Activated CD4-positive, alpha-beta memory T cell treated with anti-CD3 and anti-CD28 coated beads, Interleukin-2, amount 10 ng/mL, durations not matched to agents 7 days and 5 days (primary cell): ENCODE measurements at regions of chr17 and their contacts with region 1.

Region 1: GRCh38 chr17:75046582-75047289 is at the starts of genes ATP5PD and KCTD2:
- DNase-seq: peak; percentile 96
- H3K4me3 Mint-ChIP-seq: peak within 1 kb of the TSS; percentile 96
- H3K27ac Mint-ChIP-seq: peak within 1 kb of the TSS; percentile 91
- H3K4me1 Mint-ChIP-seq: peaks cover 45% of the 10 kb centered on the region
- H3K27me3 Mint-ChIP-seq: no peaks in the 10 kb centered on the region
- total RNA-seq, gene ATP5PD: 242 TPM
- total RNA-seq, gene KCTD2: 24.2 to 24.9 TPM

Region 2: GRCh38 chr17:74601944-74602572 is 444.7 kb before region 1 on chr17:
- CTCF ChIA-PET with region 1: no interaction called
- POLR2A ChIA-PET with region 1: no interaction called
- DNase-seq: peak; percentile 51
- H3K4me3 Mint-ChIP-seq: no peak overlapping the region
- H3K27ac Mint-ChIP-seq: no peak overlapping the region
- H3K4me1 Mint-ChIP-seq: peaks cover 17% of the 10 kb centered on the region
- H3K27me3 Mint-ChIP-seq: peaks cover 46% of the 10 kb centered on the region

Region 3: GRCh38 chr17:74815550-74816370 is 231.0 kb before region 1 on chr17:
- CTCF ChIA-PET with region 1: no interaction called
- POLR2A ChIA-PET with region 1: no interaction called
- DNase-seq: no peak
- H3K4me3 Mint-ChIP-seq: no peak overlapping the region
- H3K27ac Mint-ChIP-seq: no peak overlapping the region
- H3K4me1 Mint-ChIP-seq: peaks cover 13% of the 10 kb centered on the region
- H3K27me3 Mint-ChIP-seq: no peaks in the 10 kb centered on the region

Region 4: DNA sequence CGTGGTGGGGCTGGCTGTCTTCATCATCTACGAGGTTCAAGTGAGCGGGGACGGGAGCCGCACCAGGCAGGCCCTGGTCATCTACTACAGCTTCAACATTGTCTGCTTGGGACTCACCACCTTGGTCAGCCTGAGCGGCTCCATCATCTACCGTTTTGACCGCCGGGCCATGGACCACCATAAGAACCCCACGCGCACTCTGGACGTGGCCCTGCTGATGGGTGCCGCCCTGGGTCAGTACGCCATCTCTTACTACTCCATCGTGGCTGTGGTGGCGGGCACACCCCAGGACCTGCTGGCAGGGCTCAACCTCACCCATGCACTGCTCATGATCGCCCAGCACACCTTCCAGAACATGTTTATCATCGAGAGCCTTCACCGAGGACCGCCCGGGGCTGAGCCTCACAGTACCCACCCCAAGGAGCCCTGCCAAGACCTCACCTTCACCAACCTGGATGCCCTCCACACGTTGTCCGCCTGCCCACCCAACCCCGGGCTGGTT is 116.2 kb before region 1 on chr17:
- CTCF ChIA-PET with region 1: no interaction called
- POLR2A ChIA-PET with region 1: no interaction called
- DNase-seq: no peak
- H3K4me3 Mint-ChIP-seq: no peak overlapping the region
- H3K27ac Mint-ChIP-seq: no peak overlapping the region
- H3K4me1 Mint-ChIP-seq: no peaks in the 10 kb centered on the region
- H3K27me3 Mint-ChIP-seq: peaks cover 69% of the 10 kb centered on the region

Region 5: DNA sequence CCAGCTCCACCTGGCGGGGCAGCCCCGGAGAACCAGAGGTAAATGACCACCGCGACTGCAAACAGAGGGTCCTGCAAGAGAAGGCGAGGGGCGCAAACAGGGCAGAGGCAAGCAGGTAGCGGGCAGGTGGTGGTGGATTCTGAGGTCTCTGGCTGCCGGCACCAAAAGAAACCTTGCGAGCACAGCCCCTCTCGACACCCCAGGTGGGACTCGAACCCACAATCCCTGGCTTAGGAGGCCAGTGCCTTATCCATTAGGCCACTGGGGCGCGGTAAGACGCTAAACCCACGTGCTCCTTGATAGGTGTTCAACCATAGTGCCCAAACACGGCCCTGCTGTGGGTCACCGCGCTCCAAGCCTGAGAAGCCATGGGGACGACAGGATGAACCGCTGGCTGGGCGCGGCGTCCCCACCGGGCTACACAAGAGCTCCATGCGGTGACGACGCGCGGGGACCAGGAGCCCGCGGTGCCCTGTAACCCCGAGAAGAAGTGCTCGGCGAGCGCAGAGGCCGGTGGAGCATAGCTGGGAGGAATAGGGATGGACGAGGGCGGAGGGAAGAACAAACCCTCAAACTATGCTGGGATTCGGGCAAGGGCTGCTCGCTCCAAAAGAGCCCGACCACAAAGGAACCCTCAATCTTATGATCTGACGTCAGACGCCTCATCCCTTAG is 12.4 kb before region 1 on chr17:
- CTCF ChIA-PET with region 1: interaction called, 8 read pairs
- POLR2A ChIA-PET with region 1: interaction called, 31 read pairs
- DNase-seq: peak; percentile 88
- H3K4me3 Mint-ChIP-seq: peak overlapping the region; percentile 87
- H3K27ac Mint-ChIP-seq: peak overlapping the region; percentile 99
- H3K4me1 Mint-ChIP-seq: peaks cover 51% of the 10 kb centered on the region
- H3K27me3 Mint-ChIP-seq: peaks cover 8% of the 10 kb centered on the region

Region 6: GRCh38 chr17:75059369-75060345 is 12.9 kb after region 1 on chr17:
- CTCF ChIA-PET with region 1: interaction called, 10 read pairs
- POLR2A ChIA-PET with region 1: interaction called, 9 read pairs
- DNase-seq: no peak
- H3K4me3 Mint-ChIP-seq: no peak overlapping the region
- H3K27ac Mint-ChIP-seq: no peak overlapping the region
- H3K4me1 Mint-ChIP-seq: peaks cover 13% of the 10 kb centered on the region
- H3K27me3 Mint-ChIP-seq: no peaks in the 10 kb centered on the region

Region 7: DNA sequence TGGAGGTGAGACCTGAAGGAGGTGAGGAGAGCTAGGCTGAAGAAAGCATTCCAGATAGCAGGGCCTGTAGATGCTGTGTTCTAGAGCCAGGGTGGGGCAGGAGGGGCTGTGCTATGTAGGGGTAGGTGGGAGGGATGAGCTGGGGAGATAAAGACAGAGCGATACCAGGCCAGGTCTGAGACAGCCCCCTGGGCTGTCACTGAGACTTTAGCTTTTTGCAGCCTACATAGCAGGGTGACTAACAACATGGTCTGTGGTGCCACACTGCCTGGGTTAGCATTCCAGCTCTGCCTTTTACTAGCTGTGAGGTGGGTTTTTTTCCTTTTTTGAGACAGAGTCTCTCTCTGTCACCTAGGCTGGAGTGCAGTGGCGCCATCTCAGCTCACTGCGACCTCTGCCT is 173.1 kb after region 1 on chr17:
- CTCF ChIA-PET with region 1: no interaction called
- POLR2A ChIA-PET with region 1: no interaction called
- DNase-seq: no peak
- H3K4me3 Mint-ChIP-seq: no peak overlapping the region
- H3K27ac Mint-ChIP-seq: no peak overlapping the region
- H3K4me1 Mint-ChIP-seq: no peaks in the 10 kb centered on the region
- H3K27me3 Mint-ChIP-seq: no peaks in the 10 kb centered on the region